ENCODE measurements at regions of chr9 and their contacts with region 1.

Region 1: DNA sequence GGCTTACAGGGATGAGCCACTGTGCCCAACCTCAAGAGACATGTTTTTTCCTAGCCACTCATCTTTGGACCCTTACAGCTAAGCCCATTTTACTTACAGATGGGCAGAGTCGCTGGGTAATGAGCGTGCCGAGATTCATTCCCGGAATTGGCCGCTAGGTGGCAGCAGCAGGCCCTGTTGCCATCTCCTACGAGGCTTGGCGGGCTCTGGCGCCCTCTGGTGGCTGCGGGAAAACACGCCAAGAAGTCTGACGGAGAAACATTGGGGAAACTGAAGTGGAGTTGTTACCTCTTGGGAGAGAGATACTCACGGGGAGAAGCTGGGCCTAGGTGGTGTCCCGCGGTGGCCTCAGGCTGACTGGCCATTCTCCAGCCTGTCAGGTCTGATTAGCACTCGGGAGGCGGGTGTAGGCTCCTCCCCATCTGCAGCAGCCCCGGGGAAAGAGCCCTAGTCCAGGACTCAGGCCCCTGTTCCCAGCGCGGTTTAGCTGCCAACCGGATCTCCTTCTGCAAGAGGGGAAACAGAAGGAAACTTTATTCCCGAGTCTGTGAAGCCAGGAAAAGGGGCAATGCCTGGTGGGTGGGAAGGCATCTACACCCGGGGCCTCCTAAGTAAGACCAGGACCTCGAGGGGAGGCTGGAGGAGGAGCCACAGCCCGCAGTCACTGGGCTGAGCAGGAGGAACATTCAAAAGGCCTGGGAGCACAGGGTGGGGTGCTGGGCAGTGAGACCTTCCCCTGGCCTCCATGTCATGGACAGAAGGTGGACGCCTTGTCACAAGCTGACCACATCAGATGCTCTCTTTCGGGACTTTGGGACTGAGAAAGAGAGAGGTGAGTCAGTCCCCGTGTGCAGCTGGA is 9.7 kb downstream of the PTGES2 start:
- DNase-seq: peak; percentile 97
- H3K4me3 Mint-ChIP-seq: no peak overlapping the region
- H3K27ac Mint-ChIP-seq: no peak overlapping the region
- H3K4me1 Mint-ChIP-seq: peaks cover 8% of the 10 kb centered on the region
- H3K27me3 Mint-ChIP-seq: no peaks in the 10 kb centered on the region

Region 2: DNA sequence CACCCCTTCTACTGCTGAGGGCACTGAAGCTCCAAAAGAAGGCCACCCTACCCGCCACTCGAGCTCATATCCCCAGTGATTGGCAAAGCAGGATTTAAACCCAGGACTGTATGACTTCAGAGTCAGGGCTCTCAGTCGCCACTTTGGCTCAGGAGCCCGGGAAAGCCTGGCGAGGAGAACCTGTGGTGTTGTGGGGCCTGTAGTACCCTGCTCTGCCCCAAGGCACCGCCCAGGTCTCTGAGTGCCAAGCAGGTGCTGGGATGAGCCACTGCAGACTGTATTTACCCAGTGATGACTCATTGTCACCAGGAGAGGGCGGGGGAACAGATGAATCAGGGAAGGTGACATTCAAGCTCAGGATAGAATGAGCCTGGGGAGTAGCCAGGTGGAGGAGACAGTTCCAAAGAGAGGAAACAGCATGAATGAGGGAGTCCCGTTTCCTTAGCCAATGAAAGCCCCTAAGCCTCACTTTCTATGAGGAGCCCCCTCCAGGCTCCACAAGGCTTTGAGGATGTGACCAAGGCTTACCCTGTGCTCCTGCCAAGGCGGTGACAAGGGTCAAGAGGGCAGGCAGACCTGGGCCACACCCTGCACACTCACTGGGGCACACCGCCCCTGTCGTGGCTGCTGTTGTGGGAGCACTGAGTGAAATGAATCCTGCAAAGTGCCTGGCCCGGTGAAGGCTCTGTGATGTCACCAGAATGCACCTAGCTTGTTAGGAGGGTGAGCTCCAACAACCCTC is 162.4 kb before region 1 on chr9:
- CTCF ChIA-PET with region 1: interaction called, 16 read pairs
- DNase-seq: peak; percentile 83
- H3K4me3 Mint-ChIP-seq: peak overlapping the region; percentile 32
- H3K27ac Mint-ChIP-seq: peak overlapping the region; percentile 69
- H3K4me1 Mint-ChIP-seq: peaks cover 94% of the 10 kb centered on the region
- H3K27me3 Mint-ChIP-seq: no peaks in the 10 kb centered on the region

Region 3: GRCh38 chr9:128094166-128094967 is 23.5 kb before region 1 on chr9:
- CTCF ChIA-PET with region 1: interaction called, 14 read pairs
- DNase-seq: peak; percentile 86
- H3K4me3 Mint-ChIP-seq: peak overlapping the region; percentile 34
- H3K27ac Mint-ChIP-seq: peak overlapping the region; percentile 91
- H3K4me1 Mint-ChIP-seq: peaks cover 68% of the 10 kb centered on the region
- H3K27me3 Mint-ChIP-seq: no peaks in the 10 kb centered on the region

Region 4: DNA sequence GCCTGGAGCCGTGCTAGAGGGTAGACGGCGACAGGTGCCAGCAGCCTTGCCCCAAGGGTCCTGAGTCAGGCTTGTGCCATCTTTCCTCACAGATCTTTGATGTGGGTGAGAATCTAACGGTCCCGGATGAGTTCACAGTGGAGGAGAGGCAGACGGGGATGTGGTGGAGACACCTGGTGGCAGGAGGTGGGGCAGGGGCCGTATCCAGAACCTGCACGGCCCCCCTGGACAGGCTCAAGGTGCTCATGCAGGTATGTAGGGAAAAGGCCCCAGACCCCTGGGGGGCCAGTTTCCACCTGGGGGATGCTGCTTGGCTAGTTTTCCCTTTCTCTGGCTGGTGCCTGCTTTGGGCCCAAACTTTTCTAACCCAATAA is 14.3 kb before region 1 on chr9:
- CTCF ChIA-PET with region 1: interaction called, 26 read pairs
- DNase-seq: peak; percentile 68
- H3K4me3 Mint-ChIP-seq: no peak overlapping the region
- H3K27ac Mint-ChIP-seq: peak overlapping the region; percentile 58
- H3K4me1 Mint-ChIP-seq: peaks cover 65% of the 10 kb centered on the region
- H3K27me3 Mint-ChIP-seq: no peaks in the 10 kb centered on the region

Region 5: GRCh38 chr9:128296337-128297220 is 178.7 kb after region 1 on chr9:
- CTCF ChIA-PET with region 1: no interaction called
- DNase-seq: no peak
- H3K4me3 Mint-ChIP-seq: no peak overlapping the region
- H3K27ac Mint-ChIP-seq: no peak overlapping the region
- H3K4me1 Mint-ChIP-seq: no peaks in the 10 kb centered on the region
- H3K27me3 Mint-ChIP-seq: no peaks in the 10 kb centered on the region

Region 6: GRCh38 chr9:128396970-128397613 is 279.2 kb after region 1 on chr9:
- CTCF ChIA-PET with region 1: no interaction called
- DNase-seq: no peak
- H3K4me3 Mint-ChIP-seq: no peak overlapping the region
- H3K27ac Mint-ChIP-seq: no peak overlapping the region
- H3K4me1 Mint-ChIP-seq: no peaks in the 10 kb centered on the region
- H3K27me3 Mint-ChIP-seq: peaks cover 37% of the 10 kb centered on the region

Measured in activated naive CD4-positive, alpha-beta T cell treated with anti-CD3 and anti-CD28 coated beads, Interleukin-2, amount 10 ng/mL, durations not matched to agents 7 days and 5 days (primary cell).